ENCODE measurements at regions of chr19 and their contacts with region 1.

Region 1: DNA sequence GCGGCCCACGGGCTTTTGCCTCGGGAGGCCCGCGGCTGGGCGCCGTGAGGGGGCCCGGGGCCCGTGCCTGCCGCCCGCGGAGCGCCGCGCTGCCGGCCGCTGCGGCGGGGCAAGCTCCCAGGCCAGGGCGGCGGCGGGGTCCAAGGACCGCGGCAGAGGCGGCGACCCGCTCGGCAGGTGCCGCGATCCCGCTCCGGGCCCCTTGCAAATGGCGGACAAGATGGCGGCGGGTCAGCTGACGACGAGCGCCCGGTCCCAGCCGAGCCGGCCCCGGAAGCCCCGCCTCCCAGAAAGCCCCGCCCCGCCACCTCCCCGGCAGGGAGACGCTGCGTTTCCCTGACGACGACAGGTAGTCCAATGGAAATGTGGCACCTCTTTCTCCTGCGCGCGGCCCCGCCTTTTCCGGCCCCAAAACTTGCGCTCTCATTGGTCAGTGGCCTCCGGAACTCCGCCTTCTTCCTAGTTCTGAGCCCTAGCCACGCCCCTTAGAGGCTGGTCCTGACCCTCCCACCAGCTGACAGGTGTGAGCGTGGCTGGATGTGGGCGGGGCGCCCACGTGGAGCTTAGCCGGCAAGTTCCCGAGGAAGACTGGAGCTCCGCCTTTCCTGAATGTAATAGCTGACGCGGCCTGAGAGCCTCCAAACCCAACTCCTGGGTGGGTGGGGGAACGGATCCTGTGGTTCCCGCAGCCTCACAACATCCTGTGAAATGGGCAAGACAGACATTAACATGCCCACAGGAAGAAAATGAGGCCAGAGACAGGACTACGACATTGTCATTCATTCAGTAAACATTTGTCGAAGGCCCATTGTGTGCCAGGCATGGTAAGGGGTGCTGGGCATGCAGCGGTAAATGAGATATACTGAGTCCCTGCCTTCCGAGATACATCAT is at the start of gene AP3D1:
- DNase-seq: peak; percentile 100
- H3K4me3 Mint-ChIP-seq: peak within 1 kb of the TSS; percentile 83
- H3K27ac Mint-ChIP-seq: peak within 1 kb of the TSS; percentile 94
- H3K4me1 Mint-ChIP-seq: peaks cover 40% of the 10 kb centered on the region
- H3K27me3 Mint-ChIP-seq: peaks cover 1% of the 10 kb centered on the region
- total RNA-seq, gene AP3D1: 120 and 124 TPM in 2 replicates

Region 2: GRCh38 chr19:1905071-1905862 is 246.3 kb before region 1 on chr19 and contains the starts of genes ADAT3 and SCAMP4:
- intact Hi-C with region 1: loop called (anchors 1 kb)
- DNase-seq: peak; percentile 99
- H3K4me3 Mint-ChIP-seq: peak within 1 kb of the TSS; percentile 90
- H3K27ac Mint-ChIP-seq: peak within 1 kb of the TSS; percentile 83
- H3K4me1 Mint-ChIP-seq: peaks cover 27% of the 10 kb centered on the region
- H3K27me3 Mint-ChIP-seq: no peaks in the 10 kb centered on the region
- total RNA-seq, gene ADAT3: 8.4 and 9.6 TPM in 2 replicates
- total RNA-seq, gene SCAMP4: 38.0 and 41.5 TPM in 2 replicates

Region 3: DNA sequence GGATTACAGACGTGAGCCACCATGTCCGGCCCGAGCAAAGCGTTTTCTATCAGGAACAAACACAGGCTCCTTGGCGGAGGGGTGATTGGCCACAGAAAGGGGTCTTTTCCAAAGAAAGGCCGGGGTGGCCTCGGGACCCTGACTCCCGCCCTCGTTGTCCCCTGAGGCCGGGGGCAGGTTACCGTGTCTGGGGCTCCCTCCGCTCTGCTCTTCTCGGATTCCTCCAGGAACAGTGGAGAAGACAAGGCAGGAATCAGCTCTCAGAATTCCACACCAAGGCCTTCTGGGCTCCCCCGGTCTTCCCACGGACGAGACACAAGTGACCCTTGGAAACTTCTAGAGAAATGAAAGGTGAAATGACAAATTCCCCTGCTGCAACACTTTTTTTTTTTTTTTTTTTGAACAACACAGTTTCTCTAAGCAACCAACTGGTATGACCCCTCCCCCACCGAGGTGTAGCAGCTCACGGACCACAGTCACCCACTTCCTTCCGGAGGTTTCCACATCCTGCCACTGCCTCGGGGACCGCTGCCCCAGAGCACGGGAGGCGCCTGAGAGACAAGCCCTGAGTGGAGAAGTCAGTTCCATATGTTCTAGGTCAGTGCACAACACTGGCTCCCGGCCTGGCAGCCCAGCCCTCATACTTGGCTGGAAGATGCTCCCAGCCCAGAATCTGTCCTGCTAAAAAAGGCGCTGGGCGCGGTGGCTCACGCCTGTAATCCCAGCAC is 66.4 kb before region 1 on chr19:
- intact Hi-C with region 1: loop called (anchors 1 kb)
- DNase-seq: peak; percentile 96
- H3K4me3 Mint-ChIP-seq: peak overlapping the region; percentile 94
- H3K27ac Mint-ChIP-seq: peak overlapping the region; percentile 96
- H3K4me1 Mint-ChIP-seq: peaks cover 69% of the 10 kb centered on the region
- H3K27me3 Mint-ChIP-seq: peaks cover 2% of the 10 kb centered on the region

Region 4: GRCh38 chr19:2236314-2237050 is 84.9 kb after region 1 on chr19 and contains the starts of genes PLEKHJ1 and SF3A2:
- intact Hi-C with region 1: loop called (anchors 1 kb)
- DNase-seq: peak; percentile 97
- H3K4me3 Mint-ChIP-seq: peak within 1 kb of the TSS; percentile 97
- H3K27ac Mint-ChIP-seq: peak within 1 kb of the TSS; percentile 96
- H3K4me1 Mint-ChIP-seq: peaks cover 56% of the 10 kb centered on the region
- H3K27me3 Mint-ChIP-seq: peaks cover 4% of the 10 kb centered on the region
- total RNA-seq, gene PLEKHJ1: 67.5 and 68.2 TPM in 2 replicates
- total RNA-seq, gene SF3A2: 153 and 169 TPM in 2 replicates

Region 5: GRCh38 chr19:2375341-2376121 is 223.9 kb after region 1 on chr19:
- intact Hi-C with region 1: no loop called
- DNase-seq: no peak
- H3K4me3 Mint-ChIP-seq: no peak overlapping the region
- H3K27ac Mint-ChIP-seq: no peak overlapping the region
- H3K4me1 Mint-ChIP-seq: no peaks in the 10 kb centered on the region
- H3K27me3 Mint-ChIP-seq: no peaks in the 10 kb centered on the region

Region 6: GRCh38 chr19:2391118-2391725 is 239.6 kb after region 1 on chr19:
- intact Hi-C with region 1: loop called (anchors 1 kb)
- DNase-seq: peak; percentile 29
- H3K4me3 Mint-ChIP-seq: no peak overlapping the region
- H3K27ac Mint-ChIP-seq: no peak overlapping the region
- H3K4me1 Mint-ChIP-seq: peaks cover 5% of the 10 kb centered on the region
- H3K27me3 Mint-ChIP-seq: peaks cover 2% of the 10 kb centered on the region